HAP-1 (cell line): ENCODE measurements at regions of chrX and their contacts with region 1.

Region 1: GRCh38 chrX:152632445-152633097 is 5.1 kb upstream of the GABRQ start:
- DNase-seq: peak; percentile 39 to 81
- H3K4me3 ChIP-seq: no peak overlapping the region
- H3K4me1 ChIP-seq: no peaks in the 10 kb centered on the region
- H3K27me3 ChIP-seq: peaks cover 3% of the 10 kb centered on the region

Region 2: GRCh38 chrX:151753313-151754041 is 879.1 kb before region 1 on chrX:
- in situ Hi-C with region 1: loop called (anchors 10 kb)
- DNase-seq: peak; percentile 6 to 69
- H3K4me3 ChIP-seq: no peak overlapping the region
- H3K4me1 ChIP-seq: no peaks in the 10 kb centered on the region
- H3K27me3 ChIP-seq: peaks cover 1% of the 10 kb centered on the region; the same call in 1 of the 2 replicates